RWPE1 (cell line): ENCODE measurements at regions of chr12 and their contacts with region 1.

Region 1: DNA sequence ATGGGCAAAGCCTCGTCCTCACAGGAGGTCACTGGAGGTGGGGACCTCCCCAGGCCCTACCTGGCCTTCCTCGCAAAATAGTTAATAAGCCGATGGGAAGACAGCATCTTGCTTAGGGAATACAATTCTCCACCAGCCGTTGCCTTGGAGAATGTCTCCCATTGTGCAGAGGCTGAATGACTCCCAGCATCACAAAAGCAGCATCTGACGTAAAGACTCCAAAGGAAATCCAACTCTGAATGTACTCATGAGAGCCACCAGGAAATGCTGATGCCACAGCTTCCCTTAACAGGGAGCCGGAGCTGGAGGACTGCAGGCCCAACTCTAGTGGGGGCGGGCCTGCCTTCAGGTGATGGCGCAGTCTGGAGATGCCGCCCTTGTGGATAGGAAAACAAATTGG is 15.5 kb downstream of the CCDC63 start:
- DNase-seq: no peak
- H3K27ac ChIP-seq: no peak overlapping the region
- CTCF ChIP-seq: no peak

Region 2: DNA sequence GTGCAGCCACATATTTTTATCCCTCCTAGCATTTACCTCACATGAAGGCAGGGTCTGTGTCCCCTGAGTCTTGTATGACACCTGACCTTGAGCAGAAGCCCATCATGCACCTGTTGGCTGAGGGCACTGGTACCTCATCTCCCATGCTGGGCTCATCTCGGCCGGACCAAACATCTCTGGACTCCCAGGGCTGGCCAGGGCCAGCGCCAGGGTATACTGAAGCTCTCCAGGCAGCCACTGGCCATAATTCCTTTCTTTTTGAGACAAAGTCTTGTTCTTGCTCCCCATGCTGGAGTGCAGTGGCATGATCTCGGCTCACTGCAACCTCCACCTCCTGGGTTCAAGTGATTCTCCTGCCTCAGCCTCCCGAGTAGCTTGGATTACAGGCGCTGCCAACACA is 195.4 kb before region 1 on chr12:
- CTCF ChIA-PET with region 1: no interaction called
- POLR2A ChIA-PET with region 1: interaction called, 10 read pairs
- DNase-seq: no peak
- H3K27ac ChIP-seq: no peak overlapping the region
- CTCF ChIP-seq: no peak

Region 3: DNA sequence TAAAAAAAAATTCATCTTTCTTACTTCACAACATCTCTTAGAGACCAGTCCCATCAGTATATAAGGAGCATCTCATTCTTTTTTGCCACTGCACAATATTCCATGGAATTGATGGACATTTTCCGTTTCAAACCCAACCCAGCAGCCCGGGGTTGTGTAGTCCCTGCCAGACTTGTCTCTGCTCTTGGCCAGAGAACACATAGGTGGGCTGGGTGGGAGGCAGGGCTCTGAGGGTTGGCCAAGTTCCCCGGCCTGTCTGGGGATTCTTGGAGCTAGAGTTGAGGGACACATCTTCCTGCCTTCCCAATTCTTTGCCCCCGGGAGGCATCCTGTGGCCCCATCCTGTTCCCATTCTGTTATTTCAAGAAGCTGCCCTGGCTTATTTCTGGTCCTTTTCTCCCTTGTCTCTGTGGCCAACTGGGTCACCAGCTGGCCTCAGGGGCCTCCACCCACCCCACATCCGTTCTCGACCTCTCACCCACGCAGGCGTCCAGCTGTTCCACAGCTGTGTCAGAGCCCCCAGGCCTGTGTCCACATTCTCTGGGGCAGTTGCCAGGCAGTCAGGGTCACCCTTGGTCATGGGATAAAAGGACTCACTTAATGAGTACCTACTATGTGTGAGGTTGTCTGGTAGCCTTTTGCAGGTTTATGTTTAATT is 67.6 kb before region 1 on chr12:
- CTCF ChIA-PET with region 1: no interaction called
- POLR2A ChIA-PET with region 1: no interaction called
- DNase-seq: no peak
- H3K27ac ChIP-seq: no peak overlapping the region
- CTCF ChIP-seq: no peak